ENCODE measurements at regions of chr7 and their contacts with region 1.

Region 1: DNA sequence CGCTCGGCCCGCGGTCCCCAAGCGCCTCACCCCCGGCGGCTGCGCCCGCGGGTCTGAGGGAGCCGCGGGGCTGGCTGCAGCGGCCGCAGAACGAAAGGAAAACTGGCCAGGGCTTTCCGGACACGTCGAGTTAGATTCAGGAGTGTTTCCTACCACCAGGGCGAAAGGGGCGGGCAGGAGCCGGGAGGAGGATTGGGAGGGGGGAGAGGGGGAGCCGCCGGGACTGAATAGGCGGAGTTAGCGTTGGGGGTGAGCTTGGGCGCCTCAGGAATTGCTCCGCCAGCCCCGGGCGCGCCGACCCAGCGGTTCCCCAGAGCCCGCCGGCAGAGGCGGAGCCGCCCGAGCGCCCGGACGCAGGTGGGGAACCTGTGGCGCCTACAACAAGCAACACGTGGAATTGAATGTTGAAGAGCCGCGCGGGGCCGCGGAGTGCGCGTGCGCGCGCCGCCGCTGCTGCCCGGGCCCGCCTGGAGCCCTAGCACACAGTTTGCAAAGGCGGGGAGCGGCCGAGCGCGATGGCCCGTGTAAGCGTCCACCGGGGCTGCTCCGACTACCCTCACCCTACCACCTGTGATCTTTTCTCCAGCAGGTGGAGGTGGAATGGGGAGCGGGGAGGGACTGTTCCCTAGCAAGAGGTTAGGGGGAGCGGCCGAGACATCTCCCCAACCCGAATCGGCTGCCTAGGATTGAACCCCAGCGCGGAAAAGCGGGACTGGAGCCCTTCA is at the start of gene CADPS2:
- DNase-seq: peak; percentile 93
- H3K4me3 Mint-ChIP-seq: peak within 1 kb of the TSS; percentile 88
- H3K27ac Mint-ChIP-seq: peak within 1 kb of the TSS; percentile 23
- H3K4me1 Mint-ChIP-seq: peaks cover 21% of the 10 kb centered on the region
- H3K27me3 Mint-ChIP-seq: peaks cover 13% of the 10 kb centered on the region
- CTCF ChIP-seq: no peak
- total RNA-seq, gene CADPS2: 7.4 and 10.1 TPM in 2 replicates

Region 2: DNA sequence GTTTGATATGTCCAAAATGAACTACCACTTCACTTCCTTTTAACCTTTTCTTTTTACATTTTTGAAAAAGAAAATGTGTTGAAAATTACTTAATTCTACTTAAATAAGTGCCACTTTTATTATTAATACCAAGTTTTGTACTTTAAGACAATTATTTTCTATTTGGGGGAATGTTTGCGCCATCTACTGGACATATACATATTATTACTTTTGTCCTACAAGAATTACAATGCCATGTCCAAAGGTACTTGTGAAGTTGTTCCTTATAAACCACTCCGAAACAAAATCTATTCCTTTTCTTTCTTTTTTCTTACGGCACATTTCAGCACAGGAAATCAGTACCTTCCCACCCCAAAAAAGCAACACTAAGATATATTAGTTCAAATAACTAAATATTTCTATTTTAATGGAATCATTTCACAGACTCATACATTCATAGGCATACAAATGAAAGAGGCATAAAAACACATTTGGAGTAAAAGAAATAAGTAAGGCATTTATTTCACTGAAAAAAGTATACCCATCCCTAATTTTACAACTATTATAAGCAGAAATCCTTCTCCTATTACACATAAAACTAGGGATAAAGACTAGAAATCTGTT is 357.5 kb before region 1 on chr7:
- CTCF ChIA-PET with region 1: interaction called, 4 read pairs
- POLR2A ChIA-PET with region 1: no interaction called
- intact Hi-C with region 1: loop called (anchors 10 kb)
- DNase-seq: peak; percentile 46
- H3K4me3 Mint-ChIP-seq: no peak overlapping the region
- H3K27ac Mint-ChIP-seq: no peak overlapping the region
- H3K4me1 Mint-ChIP-seq: no peaks in the 10 kb centered on the region
- H3K27me3 Mint-ChIP-seq: no peaks in the 10 kb centered on the region
- CTCF ChIP-seq: peak; percentile 42

Region 3: DNA sequence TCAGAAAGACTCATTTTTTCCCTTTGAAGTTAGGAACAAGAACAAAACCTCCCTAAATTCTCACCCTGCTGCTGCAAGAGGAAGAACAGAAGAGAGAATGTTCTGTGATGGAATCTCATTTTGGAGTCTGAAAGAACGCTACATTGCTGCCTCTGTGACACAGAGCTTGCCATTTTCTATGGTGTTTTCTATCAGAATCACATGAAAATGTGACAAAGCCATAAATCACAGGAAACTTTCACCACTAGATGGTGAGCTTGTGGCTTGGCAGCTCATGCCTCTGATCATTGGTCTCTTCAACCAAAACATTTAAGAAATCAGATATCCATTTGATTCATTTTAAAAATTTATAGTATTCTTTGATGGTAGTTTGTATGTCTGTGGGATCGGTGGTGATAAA is 83.2 kb before region 1 on chr7:
- CTCF ChIA-PET with region 1: no interaction called
- POLR2A ChIA-PET with region 1: no interaction called
- intact Hi-C with region 1: loop called (anchors 5 kb)
- DNase-seq: peak; percentile 52
- H3K4me3 Mint-ChIP-seq: no peak overlapping the region
- H3K27ac Mint-ChIP-seq: no peak overlapping the region
- H3K4me1 Mint-ChIP-seq: no peaks in the 10 kb centered on the region
- H3K27me3 Mint-ChIP-seq: no peaks in the 10 kb centered on the region
- CTCF ChIP-seq: peak; percentile 38

Region 4: GRCh38 chr7:122867471-122867980 is 19.0 kb before region 1 on chr7:
- CTCF ChIA-PET with region 1: interaction called, 4 read pairs
- POLR2A ChIA-PET with region 1: interaction called, 12 read pairs
- intact Hi-C with region 1: no loop called
- DNase-seq: no peak
- H3K4me3 Mint-ChIP-seq: no peak overlapping the region
- H3K27ac Mint-ChIP-seq: no peak overlapping the region
- H3K4me1 Mint-ChIP-seq: peaks cover 6% of the 10 kb centered on the region
- H3K27me3 Mint-ChIP-seq: no peaks in the 10 kb centered on the region
- CTCF ChIP-seq: no peak

Region 5: DNA sequence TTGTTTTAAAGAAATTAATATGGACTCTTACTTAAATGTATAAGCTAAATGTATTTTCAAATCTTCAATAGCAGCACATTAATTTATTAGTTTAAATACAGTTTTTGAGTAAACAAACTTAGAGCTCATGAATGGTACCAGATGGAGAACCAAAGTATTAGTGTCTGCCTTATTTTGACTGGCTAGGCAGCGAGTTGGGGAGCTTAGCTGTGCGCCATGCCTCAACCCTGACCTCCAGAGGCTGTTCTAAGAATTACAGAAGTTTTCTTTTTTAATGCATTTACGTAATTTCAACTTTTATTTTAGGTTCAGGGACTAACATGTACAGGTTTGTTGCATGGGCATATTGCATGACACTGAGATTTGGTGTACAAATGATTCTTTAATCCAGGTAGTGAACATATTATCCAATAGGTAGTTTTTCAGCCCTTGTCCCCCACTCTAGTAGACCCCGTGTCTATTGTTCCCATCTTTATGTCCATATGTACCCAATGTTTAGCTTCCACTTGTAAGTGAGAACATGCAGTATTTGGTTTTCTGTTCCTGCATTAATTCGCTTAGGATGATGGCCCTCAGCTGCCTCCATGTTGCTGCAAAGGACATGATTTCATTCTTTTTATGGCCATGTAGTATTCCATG is 481.1 kb after region 1 on chr7:
- CTCF ChIA-PET with region 1: interaction called, 10 read pairs
- POLR2A ChIA-PET with region 1: no interaction called
- intact Hi-C with region 1: loop called (anchors 5 kb)
- DNase-seq: peak; percentile 60
- H3K4me3 Mint-ChIP-seq: no peak overlapping the region
- H3K27ac Mint-ChIP-seq: no peak overlapping the region
- H3K4me1 Mint-ChIP-seq: no peaks in the 10 kb centered on the region
- H3K27me3 Mint-ChIP-seq: no peaks in the 10 kb centered on the region
- CTCF ChIP-seq: peak; percentile 87